AG04450 (cell line): ENCODE measurements at regions of chr12 and their contacts with region 1.

Region 1: GRCh38 chr12:122051231-122051876 is 27.2 kb upstream of the MLXIP start:
- DNase-seq: no peak
- H3K4me3 ChIP-seq: no peak overlapping the region
- H3K27ac ChIP-seq: peak overlapping the region; percentile 47
- H3K27me3 ChIP-seq: no peaks in the 10 kb centered on the region
- CTCF ChIP-seq: no peak

Region 2: DNA sequence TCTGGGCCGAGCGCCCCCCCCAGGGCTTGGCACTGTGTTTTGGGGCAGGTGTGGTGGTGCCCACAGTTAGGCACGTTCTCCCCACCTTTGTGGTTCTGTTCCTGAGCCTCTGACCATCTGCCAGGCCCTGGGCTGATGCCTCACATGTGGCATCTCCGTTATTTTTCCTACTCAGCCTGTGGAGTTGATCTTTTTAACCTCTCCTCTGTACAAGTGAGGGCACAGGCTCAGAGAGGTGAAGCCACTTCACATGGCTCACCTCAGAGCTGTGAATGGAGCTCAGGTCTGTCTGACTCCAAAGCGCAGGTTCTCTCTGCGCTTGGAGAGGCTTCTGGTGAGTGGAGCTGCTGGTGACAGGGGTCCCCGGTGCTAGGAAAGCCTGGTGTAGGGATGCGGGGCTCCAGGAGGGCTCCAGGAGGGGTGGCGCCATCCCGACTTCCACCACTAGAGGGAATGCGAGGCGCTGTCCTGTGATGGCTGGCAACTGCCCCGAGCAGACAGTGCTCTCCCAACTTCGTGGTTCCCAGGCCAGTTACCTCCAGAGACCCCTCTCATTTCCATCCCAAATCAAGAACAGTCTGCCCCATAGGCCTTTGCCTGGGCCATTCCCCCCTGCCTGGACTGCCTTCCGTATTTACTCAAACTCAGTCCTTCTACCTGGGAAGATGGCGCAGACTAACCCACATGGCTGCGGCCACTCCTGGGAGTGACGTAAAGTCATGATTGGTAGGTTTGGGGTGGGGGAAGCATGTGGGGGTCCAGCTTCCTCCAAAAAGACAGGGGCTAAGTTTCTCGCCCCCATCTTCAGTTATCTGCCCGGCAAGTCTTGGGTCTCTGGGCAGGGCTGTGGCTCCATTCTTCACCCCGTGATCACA is 19.8 kb before region 1 on chr12:
- CTCF ChIA-PET with region 1: no interaction called
- POLR2A ChIA-PET with region 1: no interaction called
- DNase-seq: no peak
- H3K4me3 ChIP-seq: no peak overlapping the region
- H3K27ac ChIP-seq: no peak overlapping the region
- H3K27me3 ChIP-seq: no peaks in the 10 kb centered on the region
- CTCF ChIP-seq: peak; percentile 80

Region 3: DNA sequence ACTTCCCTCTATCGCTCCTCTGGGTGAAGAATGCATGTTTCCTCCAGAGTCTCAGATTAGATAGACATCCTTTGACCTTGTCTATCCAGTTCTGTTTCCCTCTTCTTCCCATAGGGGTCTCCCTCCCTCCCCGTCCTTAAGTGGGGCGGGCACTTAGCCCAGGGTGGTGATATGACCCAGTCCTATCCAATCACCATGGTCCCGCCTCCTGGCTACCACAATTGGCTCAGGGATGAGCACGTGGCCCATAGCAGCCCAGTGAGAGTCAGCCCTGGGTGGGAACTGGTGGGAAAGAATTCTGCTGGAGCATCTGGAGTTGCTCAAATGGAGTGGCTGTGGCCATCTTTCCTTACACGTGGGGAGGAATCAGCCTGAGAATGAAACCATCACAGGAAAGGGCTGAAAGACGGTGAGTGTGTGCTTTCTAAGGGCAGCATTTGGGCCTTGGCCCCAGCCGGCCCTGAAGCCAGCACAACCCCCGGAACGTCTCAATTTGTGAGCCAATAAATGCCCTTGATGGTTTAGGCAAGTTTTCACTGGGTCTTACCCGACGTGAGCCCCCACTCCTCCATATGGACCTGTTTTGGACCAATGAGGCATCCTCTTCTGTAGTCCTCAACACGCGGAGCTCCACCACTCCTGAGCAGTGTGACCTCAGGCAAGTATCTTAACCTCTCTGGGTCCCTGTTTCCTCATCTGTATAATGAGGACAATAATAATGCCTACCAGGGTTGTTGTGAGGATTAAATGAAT is 12.8 kb after region 1 on chr12:
- CTCF ChIA-PET with region 1: interaction called, 11 read pairs
- POLR2A ChIA-PET with region 1: interaction called, 3 read pairs
- DNase-seq: no peak
- H3K4me3 ChIP-seq: no peak overlapping the region
- H3K27ac ChIP-seq: peak overlapping the region; percentile 79
- H3K27me3 ChIP-seq: no peaks in the 10 kb centered on the region
- CTCF ChIP-seq: peak; percentile 47

Region 4: DNA sequence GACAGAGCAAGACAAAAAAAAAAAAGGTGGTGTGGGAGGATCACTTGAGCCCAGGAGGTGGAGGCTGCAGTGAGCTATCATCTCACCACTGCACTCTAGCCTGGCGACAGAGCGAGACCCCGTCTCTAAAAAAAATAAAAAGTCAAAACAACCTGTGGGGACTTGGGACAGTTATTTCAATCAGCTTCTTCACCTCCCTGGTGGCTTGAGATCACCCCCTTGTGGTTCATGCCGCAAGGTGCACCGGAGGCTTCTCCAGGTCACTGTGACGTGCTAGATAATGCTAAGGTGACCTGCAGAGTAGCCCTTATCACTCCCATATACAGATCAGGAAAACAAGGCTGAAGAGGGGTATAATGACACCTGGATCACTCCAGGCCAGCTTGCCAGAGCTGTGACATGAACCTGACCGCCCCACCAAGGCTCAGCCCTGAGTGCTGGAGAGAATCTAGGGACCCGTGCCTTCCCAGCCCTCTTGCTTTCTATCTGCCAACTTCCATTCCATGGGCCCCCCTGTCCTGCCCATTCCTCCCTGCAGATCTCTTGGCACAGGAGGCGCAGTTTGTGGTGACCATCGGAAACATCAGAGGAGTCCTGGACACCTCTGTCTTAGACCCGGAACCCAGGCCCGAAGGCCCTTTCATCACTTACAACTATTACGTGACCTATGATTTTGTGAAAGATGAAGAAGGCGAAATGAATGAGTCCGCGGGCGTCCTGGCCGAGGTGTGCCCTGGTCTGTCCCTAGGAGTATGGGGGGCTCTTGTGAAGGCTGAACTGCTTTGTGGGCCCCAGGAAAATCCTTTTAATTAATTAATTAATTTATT is 139.7 kb after region 1 on chr12:
- CTCF ChIA-PET with region 1: interaction called, 16 read pairs
- POLR2A ChIA-PET with region 1: no interaction called
- DNase-seq: peak; percentile 15
- H3K4me3 ChIP-seq: no peak overlapping the region
- H3K27ac ChIP-seq: no peak overlapping the region
- H3K27me3 ChIP-seq: no peaks in the 10 kb centered on the region
- CTCF ChIP-seq: peak; percentile 86